HCT116 (cell line): ENCODE measurements at regions of chr5 and their contacts with region 1.

Region 1: GRCh38 chr5:88680253-88681132 is 202.5 kb downstream of the MEF2C start:
- DNase-seq: peak; percentile 24
- ATAC-seq: peak; percentile 92
- H3K4me3 ChIP-seq: peak overlapping the region; percentile 25 to 55
- H3K27ac ChIP-seq: no peak overlapping the region
- H3K4me1 ChIP-seq: peaks cover 0 to 12% of the 10 kb centered on the region in 2 experiments; a peak in 2 of 4 replicates
- H3K27me3 ChIP-seq: no peaks in the 10 kb centered on the region
- CTCF ChIP-seq: peak; percentile 68 to 89 (median 87); a peak in 5 of 6 replicates
- POLR2A ChIP-seq: no peak
- RAD21 ChIP-seq: peak; percentile 90

Region 2: GRCh38 chr5:87885758-87886157 is 794.7 kb before region 1 on chr5:
- CTCF ChIA-PET with region 1: no interaction called
- POLR2A ChIA-PET with region 1: no interaction called
- RAD21 ChIA-PET with region 1: no interaction called
- intact Hi-C with region 1: loop called (anchors 10 kb)
- DNase-seq: no peak
- ATAC-seq: no peak
- H3K4me3 ChIP-seq: no peak overlapping the region
- H3K27ac ChIP-seq: no peak overlapping the region
- H3K4me1 ChIP-seq: no peaks in the 10 kb centered on the region
- H3K27me3 ChIP-seq: no peaks in the 10 kb centered on the region
- CTCF ChIP-seq: peak; percentile 16 to 22 (median 21); a peak in 2 of 6 replicates
- POLR2A ChIP-seq: no peak
- RAD21 ChIP-seq: peak; percentile 44

Region 3: DNA sequence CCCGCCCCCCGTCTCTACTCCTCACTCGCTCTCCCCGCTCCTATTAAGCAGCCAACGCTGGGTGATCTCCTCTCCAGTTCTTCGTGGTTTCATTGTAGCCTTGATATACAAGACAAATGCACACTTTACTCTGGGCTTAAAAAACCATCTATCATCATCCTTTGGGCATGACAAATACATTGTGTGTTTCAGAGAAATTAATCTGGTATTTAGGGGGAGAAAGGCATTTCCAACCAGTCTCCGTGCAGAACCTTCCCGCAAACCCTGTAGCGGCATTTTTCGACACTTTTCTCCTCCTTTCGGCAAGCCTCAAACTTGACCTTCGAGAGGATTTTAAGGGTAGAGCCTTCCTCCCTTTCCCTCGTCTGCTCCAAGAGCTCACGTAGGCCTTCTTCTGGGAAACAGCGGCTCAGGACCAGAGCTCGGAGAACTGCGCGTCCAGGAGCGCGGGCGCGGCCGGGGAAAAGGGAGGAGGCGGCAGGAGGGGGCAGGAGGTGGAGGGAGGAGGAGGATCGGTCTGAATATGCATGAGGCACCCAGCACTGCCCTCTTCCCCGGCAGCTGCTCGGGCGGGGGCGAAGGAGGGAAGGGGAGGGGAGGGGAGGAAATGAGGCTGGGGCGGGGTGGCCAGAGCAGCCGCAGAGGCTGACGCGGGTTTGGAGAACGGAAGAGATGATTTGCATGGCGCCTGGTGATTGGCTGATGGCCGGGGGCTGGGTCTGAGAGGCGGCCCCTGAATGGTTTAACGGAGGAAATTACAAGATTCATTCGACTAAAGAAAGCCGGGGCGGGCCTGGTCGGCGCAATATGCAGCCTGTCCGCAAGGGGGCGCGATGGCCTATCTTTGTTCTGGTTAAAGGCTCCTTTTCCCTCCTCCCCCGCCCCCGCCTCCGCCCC is 539.4 kb before region 1 on chr5:
- CTCF ChIA-PET with region 1: interaction called, 3 read pairs
- POLR2A ChIA-PET with region 1: no interaction called
- RAD21 ChIA-PET with region 1: no interaction called
- intact Hi-C with region 1: loop called (anchors 1 kb)
- DNase-seq: peak; percentile 93
- ATAC-seq: peak; percentile 95
- H3K4me3 ChIP-seq: peak overlapping the region; percentile 54 to 63
- H3K27ac ChIP-seq: no peak overlapping the region
- H3K4me1 ChIP-seq: peaks cover 5 to 19% of the 10 kb centered on the region in 2 experiments; a peak in 3 of 4 replicates
- H3K27me3 ChIP-seq: no peaks in the 10 kb centered on the region
- CTCF ChIP-seq: peak; percentile 22 to 68 (median 51); a peak in 4 of 6 replicates
- POLR2A ChIP-seq: no peak
- RAD21 ChIP-seq: peak; percentile 56